Aorta (tissue), 5 donors: ENCODE measurements at regions of chr7 and their contacts with region 1.

Region 1: DNA sequence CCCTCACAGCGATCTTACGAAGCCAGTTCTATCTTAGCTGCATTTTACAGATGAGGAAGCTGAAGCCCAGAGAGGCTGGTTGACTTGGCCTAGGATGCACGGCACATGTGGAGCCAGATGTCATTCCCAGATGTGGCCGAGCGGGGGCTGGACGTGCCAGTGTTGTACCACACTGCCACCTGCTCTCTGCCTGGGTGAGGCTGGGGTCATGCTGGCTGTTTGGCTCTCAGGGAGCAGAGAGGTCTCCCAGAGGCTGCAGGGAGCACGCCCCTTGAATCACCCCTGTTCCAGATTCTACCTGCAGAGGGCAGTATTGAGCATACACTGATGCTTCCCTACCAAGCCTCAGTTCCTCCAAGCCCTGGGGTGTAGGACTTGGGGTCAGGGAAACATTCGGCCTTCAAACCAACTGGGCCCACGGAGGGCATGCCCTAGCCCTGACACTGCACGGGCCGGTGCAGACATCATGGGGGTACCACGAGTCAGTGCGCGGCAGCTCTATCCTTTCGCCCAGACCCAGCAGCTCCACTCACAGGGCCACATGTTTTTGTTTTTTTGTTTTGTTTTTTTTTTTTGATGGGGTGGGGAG is 3.8 kb upstream of the GTF2IRD1 start:
- DNase-seq: peak in 1 of 2 donors; percentile 55
- ATAC-seq: peak; percentile 49
- H3K4me3 ChIP-seq: no peak overlapping the region
- H3K27ac ChIP-seq: no peak overlapping the region
- H3K4me1 ChIP-seq: no peaks in the 10 kb centered on the region
- H3K27me3 ChIP-seq: no peaks in the 10 kb centered on the region

Region 2: GRCh38 chr7:74502181-74502891 is 52.4 kb after region 1 on chr7:
- intact Hi-C with region 1: loop called in 1 of 2 experiments (anchors 10 kb)
- DNase-seq: peak; percentile 66 to 89
- ATAC-seq: peak; percentile 40
- H3K4me3 ChIP-seq: no peak overlapping the region
- H3K27ac ChIP-seq: no peak overlapping the region
- H3K4me1 ChIP-seq: no peaks in the 10 kb centered on the region
- H3K27me3 ChIP-seq: no peaks in the 10 kb centered on the region

Region 3: DNA sequence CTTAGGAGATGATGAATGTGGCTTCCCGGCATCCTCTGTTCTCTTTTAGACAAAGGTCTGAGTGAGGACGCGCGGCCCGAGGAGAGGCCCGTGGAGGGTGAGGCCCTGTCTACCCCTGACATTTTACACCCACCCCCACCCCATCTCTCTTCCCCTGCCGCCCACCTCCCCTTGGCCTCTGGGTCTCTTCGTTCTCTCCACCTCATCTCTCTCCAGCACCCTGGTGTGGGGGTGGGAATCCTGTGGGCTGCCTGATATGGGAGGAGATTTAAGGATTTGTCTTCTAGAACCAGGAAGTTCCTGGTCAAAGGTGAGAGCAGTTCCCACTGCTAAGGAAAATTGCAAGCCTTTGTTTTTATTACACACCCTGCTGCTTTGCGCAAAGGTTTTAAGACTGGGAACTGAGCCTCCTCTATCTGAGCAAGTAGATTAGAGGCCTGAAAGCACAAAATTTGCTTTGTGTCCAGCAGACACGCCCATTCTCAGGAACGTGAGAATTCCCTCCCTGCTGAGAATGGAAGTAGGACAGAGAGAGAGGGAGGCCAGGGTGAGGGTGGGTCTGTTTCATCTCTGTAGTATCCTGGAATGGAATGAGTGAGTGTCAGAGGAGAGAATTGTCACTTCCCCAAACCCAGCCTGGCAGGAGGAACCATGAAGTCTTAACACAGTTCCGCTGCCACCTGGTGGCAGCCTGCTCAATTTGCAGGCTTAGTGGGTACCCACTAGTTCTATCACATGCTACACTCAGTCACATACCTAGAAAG is 95.0 kb after region 1 on chr7:
- intact Hi-C with region 1: loop called in 1 of 2 experiments (anchors 10 kb)
- DNase-seq: no peak
- ATAC-seq: no peak
- H3K4me3 ChIP-seq: no peak overlapping the region
- H3K27ac ChIP-seq: no peak overlapping the region
- H3K4me1 ChIP-seq: no peaks in the 10 kb centered on the region
- H3K27me3 ChIP-seq: no peaks in the 10 kb centered on the region

Region 4: GRCh38 chr7:74569501-74570075 is 119.7 kb after region 1 on chr7:
- intact Hi-C with region 1: loop called (anchors 5 to 10 kb)
- DNase-seq: no peak
- ATAC-seq: no peak
- H3K4me3 ChIP-seq: no peak overlapping the region
- H3K27ac ChIP-seq: no peak overlapping the region
- H3K4me1 ChIP-seq: no peaks in the 10 kb centered on the region
- H3K27me3 ChIP-seq: no peaks in the 10 kb centered on the region

Region 5: DNA sequence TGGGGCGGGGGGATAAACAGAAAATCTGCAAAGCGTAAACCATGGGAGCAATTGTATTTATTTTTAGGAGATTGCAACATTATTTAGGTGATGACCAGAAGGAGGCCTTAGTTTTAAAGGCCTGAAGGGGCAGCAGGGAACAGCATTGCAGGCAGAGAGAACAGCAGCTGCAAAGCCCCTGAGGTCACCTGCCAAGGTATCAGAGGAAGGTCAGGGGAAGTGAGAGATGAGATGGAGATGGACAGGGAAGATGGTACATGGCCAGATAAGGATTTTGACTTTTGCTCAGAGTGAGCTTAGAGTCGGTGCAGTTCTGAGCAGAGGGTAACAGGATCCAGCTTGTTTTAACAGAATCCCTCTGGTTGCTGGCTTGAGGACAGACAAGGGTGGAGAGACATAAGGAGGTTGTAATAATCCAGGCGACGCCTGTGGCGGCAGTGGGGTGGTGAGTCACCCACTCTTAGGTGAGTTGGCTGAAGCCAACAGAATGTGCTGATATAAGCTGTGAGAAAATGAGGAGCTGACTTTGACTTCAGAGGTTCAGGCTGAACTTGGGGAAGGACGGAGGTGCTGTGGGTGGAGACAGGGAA is 125.3 kb after region 1 on chr7:
- intact Hi-C with region 1: loop called in 1 of 2 experiments (anchors 10 kb)
- DNase-seq: no peak
- ATAC-seq: no peak
- H3K4me3 ChIP-seq: no peak overlapping the region
- H3K27ac ChIP-seq: no peak overlapping the region
- H3K4me1 ChIP-seq: no peaks in the 10 kb centered on the region
- H3K27me3 ChIP-seq: no peaks in the 10 kb centered on the region

Region 6: DNA sequence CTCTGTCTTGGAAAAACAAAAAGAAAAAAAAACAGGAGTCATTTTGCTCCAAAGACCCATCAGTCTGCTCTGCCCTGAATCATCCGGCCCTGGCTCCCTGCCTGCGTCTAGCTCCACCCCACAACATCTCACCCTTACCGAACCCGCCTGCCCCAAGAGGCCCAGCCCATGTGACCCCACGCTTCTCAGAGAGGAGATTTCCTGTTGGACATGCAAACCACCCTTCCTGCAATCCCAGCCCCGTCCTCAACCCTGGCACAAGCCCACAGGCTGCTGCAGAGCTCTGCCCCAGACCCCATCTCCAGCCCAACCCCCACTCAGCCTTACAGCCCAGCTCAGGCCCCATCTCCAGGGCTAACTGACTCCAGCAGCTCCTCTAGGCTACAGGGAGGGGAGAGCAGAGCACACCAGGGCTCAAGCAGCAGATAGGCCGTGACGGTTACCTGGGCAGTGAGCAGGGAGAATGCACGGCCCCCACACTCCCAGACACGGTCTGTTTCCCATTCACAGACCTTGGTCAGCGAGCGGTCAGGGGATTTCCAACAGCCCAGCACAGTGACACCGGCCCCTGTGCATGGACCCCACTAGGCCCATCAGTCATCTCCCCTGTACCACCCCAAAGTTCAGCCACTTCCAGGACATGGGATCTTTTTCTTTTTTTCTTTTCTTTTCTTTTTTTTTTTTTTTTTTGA is 137.7 kb after region 1 on chr7:
- intact Hi-C with region 1: no loop called
- DNase-seq: peak; percentile 95 to 97
- ATAC-seq: peak; percentile 95
- H3K4me3 ChIP-seq: no peak overlapping the region
- H3K27ac ChIP-seq: no peak overlapping the region
- H3K4me1 ChIP-seq: no peaks in the 10 kb centered on the region
- H3K27me3 ChIP-seq: no peaks in the 10 kb centered on the region